Mammary epithelial cell (primary cell): ENCODE measurements at regions of chr4 and their contacts with region 1.

Region 1: DNA sequence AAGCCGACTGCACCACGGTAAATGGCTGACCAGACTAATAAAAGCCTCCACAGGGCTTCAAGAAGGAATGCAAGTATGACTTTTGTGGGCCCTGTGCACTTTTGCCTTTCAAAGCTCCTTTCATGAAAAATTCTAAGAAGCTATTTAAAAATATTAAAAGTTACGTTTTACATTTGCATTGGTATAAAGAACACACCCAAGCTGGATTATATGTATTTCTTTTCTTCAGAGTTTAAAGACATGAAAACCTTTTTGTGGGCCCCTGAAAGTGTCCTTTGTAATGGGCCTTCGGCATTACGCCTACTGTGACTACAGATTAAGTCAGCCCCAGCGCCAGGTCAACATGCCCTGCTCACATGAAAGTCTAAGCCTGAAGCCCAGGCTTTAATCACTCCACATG is 20.5 kb upstream of the ASB5 start:
- DNase-seq: no peak
- H3K4me3 ChIP-seq: no peak overlapping the region
- H3K27ac ChIP-seq: no peak overlapping the region
- H3K4me1 ChIP-seq: no peaks in the 10 kb centered on the region
- H3K27me3 ChIP-seq: peaks cover 2% of the 10 kb centered on the region
- CTCF ChIP-seq: no peak

Region 2: GRCh38 chr4:176226736-176227135 is 62.8 kb before region 1 on chr4:
- CTCF ChIA-PET with region 1: no interaction called
- dilution Hi-C with region 1: no loop called
- in situ Hi-C with region 1: no loop called
- intact Hi-C with region 1: no loop called
- DNase-seq: no peak
- H3K4me3 ChIP-seq: no peak overlapping the region
- H3K27ac ChIP-seq: no peak overlapping the region
- H3K4me1 ChIP-seq: no peaks in the 10 kb centered on the region
- H3K27me3 ChIP-seq: no peaks in the 10 kb centered on the region
- CTCF ChIP-seq: no peak

Region 3: DNA sequence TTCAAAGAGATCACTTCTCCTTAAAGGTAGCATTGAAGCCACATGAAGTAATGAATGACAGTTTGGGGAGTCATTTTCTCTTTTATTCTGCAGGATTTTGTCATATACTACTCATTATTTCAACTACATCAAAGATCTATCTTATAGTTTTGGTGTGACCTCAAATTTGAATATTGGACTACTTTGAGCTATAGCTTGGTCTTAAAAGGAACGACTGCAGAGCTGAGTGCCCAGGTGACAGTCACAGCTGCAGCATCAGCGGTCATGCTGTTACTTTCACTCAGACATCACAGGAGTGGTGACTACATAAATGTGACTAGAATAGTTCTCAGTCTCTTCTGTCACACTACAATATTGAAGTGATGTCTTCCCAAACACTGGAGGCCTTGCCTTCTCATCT is 19.5 kb after region 1 on chr4:
- CTCF ChIA-PET with region 1: no interaction called
- dilution Hi-C with region 1: no loop called
- in situ Hi-C with region 1: no loop called
- intact Hi-C with region 1: loop called (anchors 1 kb)
- DNase-seq: no peak
- H3K4me3 ChIP-seq: no peak overlapping the region
- H3K27ac ChIP-seq: no peak overlapping the region
- H3K4me1 ChIP-seq: no peaks in the 10 kb centered on the region
- H3K27me3 ChIP-seq: no peaks in the 10 kb centered on the region
- CTCF ChIP-seq: no peak